ENCODE measurements at regions of chr3 and their contacts with region 1.

Region 1: GRCh38 chr3:42502429-42503250 is at the start of gene VIPR1:
- DNase-seq: peak; percentile 72 to 98 (median 88)

Region 2: GRCh38 chr3:42276141-42277132 is 226.2 kb before region 1 on chr3:
- intact Hi-C with region 1: no loop called
- DNase-seq: no peak

Region 3: GRCh38 chr3:42539869-42540714 is 37.5 kb after region 1 on chr3:
- intact Hi-C with region 1: loop called (anchors 2 kb)
- DNase-seq: peak in 3 of 10 donors; percentile 34 to 76 (median 49)

Region 4: GRCh38 chr3:42581709-42582473 is 79.3 kb after region 1 on chr3 and contains the start of gene SEC22C:
- intact Hi-C with region 1: no loop called
- DNase-seq: peak; percentile 95 to 100 (median 98)